ENCODE measurements at regions of chr13 and their contacts with region 1.

Region 1: DNA sequence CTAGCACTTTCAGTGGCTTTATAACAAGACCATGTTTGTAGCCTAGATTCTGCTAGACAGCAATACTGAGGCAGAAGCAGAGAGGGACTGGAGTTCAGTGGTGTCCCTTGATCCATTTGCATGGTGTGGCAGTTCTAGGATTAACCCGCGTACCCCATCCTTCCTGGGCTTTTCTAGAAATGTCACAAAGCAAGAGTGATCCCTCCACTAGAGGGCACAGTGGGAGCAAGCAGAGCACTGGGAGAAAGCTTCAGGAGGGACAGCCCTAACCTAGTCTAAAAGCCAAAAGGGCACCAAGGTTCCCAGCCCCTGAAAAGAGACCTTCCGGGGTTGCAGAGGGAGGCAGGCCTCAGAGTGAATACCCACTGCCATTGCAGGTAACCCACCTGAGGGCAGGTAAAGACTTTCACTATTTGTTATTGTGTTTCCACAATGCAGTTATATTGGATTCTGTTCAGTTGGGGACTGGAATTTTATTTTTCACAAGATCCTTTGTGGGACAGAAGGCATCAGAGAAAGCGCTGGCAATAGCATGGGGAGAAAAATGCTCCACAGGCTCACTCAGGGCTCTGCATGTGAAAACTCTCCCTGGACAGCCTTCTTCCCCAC is 170.6 kb downstream of the FLT1 start:
- DNase-seq: no peak
- H3K4me3 ChIP-seq: no peak overlapping the region
- CTCF ChIP-seq: peak; percentile 81

Region 2: DNA sequence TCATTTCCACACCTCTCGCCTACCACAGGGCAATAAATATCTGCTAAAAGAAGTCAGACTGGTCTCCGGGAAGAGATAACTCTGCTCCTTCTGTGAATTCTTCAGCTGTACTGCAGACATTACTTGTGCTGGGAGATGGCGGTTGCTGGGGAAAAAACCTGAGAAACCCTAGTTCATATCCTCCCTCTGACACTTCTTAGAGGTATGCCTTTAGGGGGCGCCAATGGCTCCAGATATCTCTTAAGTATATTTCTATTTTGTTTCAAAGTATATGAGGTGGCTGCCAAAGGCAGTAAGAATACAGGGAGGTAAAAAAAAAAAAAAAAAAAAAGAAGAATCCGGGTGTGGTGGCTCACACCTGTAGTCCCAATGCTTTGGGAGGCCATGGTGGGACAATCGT is 10.7 kb before region 1 on chr13:
- CTCF ChIA-PET with region 1: interaction called, 28 read pairs
- POLR2A ChIA-PET with region 1: no interaction called
- DNase-seq: no peak
- H3K4me3 ChIP-seq: no peak overlapping the region
- CTCF ChIP-seq: peak; percentile 33

Region 3: DNA sequence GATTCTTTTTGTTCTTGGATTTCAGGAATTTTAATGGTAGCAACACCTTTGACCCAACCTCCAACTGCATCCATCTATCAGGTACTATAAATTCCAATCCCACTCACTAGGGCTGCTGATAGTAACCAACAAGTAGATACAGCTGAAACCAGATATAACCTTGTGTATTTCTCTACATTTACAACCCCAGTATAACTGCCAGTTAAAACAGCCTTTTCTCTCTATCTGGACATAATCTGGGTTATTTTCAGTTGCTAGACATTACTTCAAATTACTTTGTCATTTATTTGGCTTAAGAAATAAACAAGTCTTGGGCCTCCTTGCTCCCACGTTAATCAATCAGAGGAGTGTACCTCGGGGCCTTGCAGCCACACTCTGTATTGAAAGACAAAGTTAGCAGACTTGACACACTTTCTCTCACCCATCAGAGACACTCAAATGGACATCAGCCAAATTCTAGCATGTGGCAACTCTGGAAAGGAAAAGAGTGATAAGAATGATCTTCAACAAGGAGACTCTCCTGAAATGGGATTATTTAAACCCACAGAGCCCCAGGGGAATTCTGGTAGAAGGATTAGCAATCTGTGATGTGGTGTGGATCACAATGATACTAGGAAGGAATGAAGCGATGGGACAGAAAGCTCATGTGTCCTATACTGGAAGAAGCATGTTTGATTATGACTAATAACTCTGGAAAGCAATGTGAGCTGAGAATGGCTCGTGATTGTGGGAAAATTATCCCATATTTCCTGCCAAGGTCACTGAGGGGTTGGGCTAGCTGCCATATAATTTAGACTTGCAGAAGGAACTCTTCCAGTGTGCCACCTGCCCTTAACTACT is 13.1 kb after region 1 on chr13:
- CTCF ChIA-PET with region 1: interaction called, 58 read pairs
- POLR2A ChIA-PET with region 1: no interaction called
- DNase-seq: peak; percentile 73
- H3K4me3 ChIP-seq: no peak overlapping the region
- CTCF ChIP-seq: no peak

Region 4: GRCh38 chr13:28489524-28489931 is 165.2 kb after region 1 on chr13:
- CTCF ChIA-PET with region 1: interaction called, 27 read pairs
- POLR2A ChIA-PET with region 1: no interaction called
- DNase-seq: peak; percentile 60
- H3K4me3 ChIP-seq: no peak overlapping the region
- CTCF ChIP-seq: no peak

Region 5: GRCh38 chr13:28531077-28531844 is 207.0 kb after region 1 on chr13:
- CTCF ChIA-PET with region 1: interaction called, 19 read pairs
- POLR2A ChIA-PET with region 1: no interaction called
- DNase-seq: no peak
- H3K4me3 ChIP-seq: peak overlapping the region; percentile 56
- CTCF ChIP-seq: no peak

Region 6: DNA sequence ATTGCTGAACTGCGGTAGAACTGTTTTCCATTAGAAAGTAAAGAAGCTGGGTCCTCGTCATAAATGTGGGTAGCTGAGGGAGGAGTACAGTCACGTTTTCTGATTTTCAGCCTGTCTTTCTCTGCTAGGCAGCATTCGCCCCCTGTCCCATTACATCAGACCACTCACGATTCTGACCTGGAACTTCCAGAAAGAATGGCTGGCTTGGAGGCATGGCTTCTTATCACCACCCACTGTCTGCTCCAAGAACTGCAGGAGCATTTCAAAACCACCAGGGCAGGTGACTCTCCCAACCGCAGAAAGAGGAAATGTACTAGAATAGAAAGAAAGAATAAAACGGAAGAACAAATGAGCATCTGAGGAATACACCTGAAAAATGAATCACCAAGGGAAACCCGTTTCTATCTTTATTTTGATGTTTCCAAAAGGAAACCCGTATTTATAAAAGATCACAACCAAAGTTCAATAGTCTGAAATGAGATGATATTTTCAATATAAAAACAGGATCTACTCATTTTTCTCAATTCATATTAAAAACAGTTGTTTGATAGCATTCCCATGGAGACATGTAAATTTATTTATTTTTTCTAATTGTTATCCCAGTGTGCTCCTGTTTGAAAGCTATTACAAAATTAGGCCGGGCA is 312.5 kb after region 1 on chr13:
- CTCF ChIA-PET with region 1: interaction called, 85 read pairs
- POLR2A ChIA-PET with region 1: no interaction called
- DNase-seq: no peak
- H3K4me3 ChIP-seq: no peak overlapping the region
- CTCF ChIP-seq: peak; percentile 81

Region 7: GRCh38 chr13:28658796-28659620 is 334.7 kb after region 1 on chr13 and contains the start of gene POMP:
- CTCF ChIA-PET with region 1: interaction called, 24 read pairs
- POLR2A ChIA-PET with region 1: no interaction called
- DNase-seq: peak; percentile 80
- H3K4me3 ChIP-seq: peak within 1 kb of the TSS; percentile 97
- CTCF ChIP-seq: no peak

Measured in AG04449 (cell line).